ENCODE measurements at regions of chr14 and their contacts with region 1.

Region 1: DNA sequence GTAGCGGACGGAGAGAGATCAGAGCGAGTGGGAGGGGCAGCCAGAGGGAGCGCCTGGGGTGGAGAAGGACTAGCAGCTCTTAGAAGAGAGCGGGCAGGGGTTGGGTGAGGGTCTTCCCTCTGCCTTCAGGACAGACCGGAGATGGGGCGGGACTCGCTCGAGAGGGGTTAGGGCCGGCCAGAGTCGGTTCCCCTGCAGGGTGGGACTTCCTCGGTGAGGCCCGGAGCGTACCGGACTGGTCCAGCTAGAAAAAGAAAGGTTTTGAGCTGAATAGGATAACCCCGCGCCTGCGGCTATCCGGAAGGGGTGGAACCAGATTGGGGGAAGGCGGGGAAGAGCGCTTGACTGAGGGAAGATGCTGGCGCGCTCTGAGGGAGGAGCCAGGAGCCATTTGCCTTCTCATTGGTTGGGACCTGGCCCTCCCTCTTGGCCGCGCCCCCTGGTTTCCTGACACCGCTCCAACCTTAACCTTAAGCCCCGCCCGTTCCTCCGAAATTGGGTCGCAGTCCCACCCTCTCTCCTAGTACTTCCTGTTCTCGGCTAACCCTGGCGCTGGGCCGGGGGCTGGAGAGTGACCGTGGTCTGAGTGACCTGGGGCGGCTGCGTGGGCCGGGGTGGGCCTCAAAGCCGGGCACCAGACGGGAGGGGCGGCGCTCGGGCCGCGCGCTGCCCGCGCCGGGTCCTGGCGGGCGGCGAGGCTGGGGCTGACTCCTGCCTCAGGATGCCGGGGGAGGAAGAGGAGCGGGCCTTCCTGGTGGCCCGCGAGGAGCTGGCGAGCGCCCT is at the start of gene RNF31:
- DNase-seq: peak; percentile 99
- H3K4me3 Mint-ChIP-seq: peak within 1 kb of the TSS; percentile 97
- H3K27ac Mint-ChIP-seq: peak within 1 kb of the TSS; percentile 99
- H3K4me1 Mint-ChIP-seq: peaks cover 54% of the 10 kb centered on the region
- H3K27me3 Mint-ChIP-seq: no peaks in the 10 kb centered on the region
- total RNA-seq, gene RNF31: 51.1 to 53.8 TPM

Region 2: GRCh38 chr14:24093901-24094761 is 53.0 kb before region 1 on chr14 and contains the start of gene PCK2:
- CTCF ChIA-PET with region 1: interaction called, 6 read pairs
- intact Hi-C with region 1: loop called (anchors 1 kb)
- DNase-seq: peak; percentile 94
- H3K4me3 Mint-ChIP-seq: peak within 1 kb of the TSS; percentile 99
- H3K27ac Mint-ChIP-seq: peak within 1 kb of the TSS; percentile 98
- H3K4me1 Mint-ChIP-seq: peaks cover 32% of the 10 kb centered on the region
- H3K27me3 Mint-ChIP-seq: no peaks in the 10 kb centered on the region
- total RNA-seq, gene PCK2: 117 TPM

Region 3: DNA sequence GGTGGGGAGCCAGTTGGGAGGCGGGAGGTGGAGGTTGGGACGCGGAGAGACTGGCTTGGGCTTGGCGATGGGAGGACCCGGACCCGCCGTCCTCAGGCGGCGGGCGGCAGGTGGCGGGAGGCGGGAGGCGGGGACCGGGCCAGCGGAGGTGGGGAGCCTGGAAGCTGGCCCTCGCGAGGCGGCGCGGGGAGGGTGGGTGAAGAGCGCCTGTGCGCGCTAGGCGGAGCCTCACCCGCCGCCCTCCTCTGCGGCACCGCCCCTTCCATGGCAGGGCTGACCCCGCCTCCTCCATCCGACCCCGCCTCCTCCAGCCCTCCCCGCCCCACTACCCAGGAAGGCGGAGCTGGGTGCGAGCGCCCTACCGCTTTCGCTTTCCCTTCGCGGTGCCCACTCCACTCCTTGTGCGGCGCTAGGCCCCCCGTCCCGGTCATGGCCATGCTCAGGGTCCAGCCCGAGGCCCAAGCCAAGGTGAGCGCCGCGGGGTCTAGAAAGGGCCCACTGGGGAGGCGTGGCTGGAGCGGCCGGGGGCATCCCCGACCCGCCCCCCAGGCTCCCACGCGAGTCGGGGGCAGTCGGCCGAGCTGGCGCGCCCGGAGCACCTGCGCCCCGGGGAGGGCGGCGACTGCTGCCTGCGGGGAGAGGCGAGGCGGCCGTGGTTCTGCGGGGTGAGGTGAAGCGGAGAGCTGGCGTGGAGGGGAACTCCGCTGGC is 11.2 kb before region 1 on chr14 and contains the start of gene PSME1:
- CTCF ChIA-PET with region 1: interaction called, 7 read pairs
- intact Hi-C with region 1: loop called (anchors 1 kb)
- DNase-seq: peak; percentile 97
- H3K4me3 Mint-ChIP-seq: peak within 1 kb of the TSS; percentile 86
- H3K27ac Mint-ChIP-seq: peak within 1 kb of the TSS; percentile 93
- H3K4me1 Mint-ChIP-seq: peaks cover 52% of the 10 kb centered on the region
- H3K27me3 Mint-ChIP-seq: no peaks in the 10 kb centered on the region
- total RNA-seq, gene PSME1: 406 to 416 TPM

Region 4: DNA sequence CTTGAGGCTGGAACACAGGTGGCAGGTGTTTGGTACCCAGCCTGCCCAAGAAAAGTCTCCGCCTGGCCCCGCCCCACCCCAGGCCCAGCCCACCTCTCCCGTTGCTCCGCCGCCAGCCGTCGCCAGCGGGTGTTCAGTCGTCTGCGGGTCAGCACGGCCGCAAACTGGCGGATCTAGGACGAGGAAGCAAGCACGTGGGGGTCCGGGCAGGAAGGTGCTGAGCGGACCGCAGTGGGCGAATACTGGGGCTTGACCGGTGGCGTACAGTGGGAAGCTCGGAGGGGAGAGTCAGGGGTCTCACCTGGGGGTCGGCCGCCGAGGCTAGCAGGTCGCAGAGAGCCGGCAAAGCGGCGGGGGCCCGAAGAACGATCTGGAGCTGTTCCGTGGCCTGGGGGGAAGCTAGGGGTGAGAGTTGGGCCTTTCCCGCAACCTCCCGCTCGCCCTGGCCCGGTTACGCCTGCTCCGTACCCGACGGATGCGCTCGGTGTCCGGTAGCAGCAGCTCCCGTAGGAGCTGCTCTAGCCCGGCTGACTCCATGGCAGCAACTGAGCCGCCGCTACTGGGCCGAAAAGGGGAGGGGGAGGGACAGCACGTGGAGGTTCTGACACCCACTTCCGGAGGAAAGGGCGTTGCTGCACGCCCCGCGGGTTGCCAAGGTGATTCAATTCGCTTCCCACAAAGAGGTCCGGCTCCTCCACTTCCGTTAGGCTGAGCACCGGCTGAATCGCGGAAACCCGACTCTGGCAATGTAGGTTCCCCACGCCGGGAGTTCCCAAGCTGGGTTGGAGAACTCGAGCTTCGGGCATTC is 41.3 kb after region 1 on chr14 and contains the start of gene IPO4:
- CTCF ChIA-PET with region 1: interaction called, 4 read pairs
- intact Hi-C with region 1: loop called (anchors 1 kb)
- DNase-seq: peak; percentile 97
- H3K4me3 Mint-ChIP-seq: peak within 1 kb of the TSS; percentile 85
- H3K27ac Mint-ChIP-seq: peak within 1 kb of the TSS; percentile 78
- H3K4me1 Mint-ChIP-seq: peaks cover 46% of the 10 kb centered on the region
- H3K27me3 Mint-ChIP-seq: no peaks in the 10 kb centered on the region
- total RNA-seq, gene IPO4: 64.2 to 74.5 TPM

Region 5: DNA sequence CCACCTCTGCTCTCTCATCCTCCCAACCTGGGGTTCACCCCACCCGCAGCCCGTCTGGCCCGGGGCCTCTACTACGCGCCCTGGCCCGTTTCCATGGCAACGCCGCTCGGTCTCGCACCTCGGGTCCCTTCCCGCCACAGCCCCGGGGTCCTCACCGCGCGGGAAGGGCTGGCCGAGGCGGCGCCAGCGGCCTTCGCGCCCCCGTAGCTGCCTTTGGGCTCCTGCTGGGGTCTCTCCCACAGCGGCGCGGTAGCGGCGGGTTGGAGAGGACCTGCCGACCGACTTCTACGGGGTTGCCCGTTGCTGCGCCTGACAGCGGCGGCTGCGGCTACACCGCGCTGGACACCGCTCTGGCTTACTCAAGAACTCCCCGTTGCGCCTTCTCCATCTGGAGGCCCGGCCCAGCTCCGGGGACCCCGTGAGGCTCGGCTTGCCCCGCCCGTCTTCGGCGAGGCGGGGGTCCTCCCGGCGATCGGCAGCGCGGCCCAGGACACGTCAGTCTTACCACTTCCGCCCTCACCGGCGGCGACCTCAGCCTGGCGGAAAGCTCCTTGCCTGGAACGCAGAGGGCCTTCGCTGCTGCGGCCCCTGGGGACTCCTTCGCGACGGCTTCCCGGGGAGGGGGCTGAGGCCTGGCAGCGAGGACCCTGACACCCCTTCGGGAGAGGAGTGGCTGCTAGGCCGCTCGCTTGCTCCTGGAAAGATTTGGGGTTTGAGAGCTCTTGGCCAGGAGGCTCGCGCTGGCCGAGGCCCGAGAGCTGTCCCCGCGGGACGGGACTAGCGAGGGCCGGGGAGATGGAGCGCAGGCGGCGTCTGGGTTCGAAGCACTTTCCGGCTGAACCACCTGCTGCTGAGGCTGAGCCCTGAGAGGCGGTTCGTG is 48.3 kb after region 1 on chr14 and contains the start of gene TM9SF1:
- CTCF ChIA-PET with region 1: no interaction called
- intact Hi-C with region 1: loop called (anchors 1 kb)
- DNase-seq: peak; percentile 89
- H3K4me3 Mint-ChIP-seq: peak within 1 kb of the TSS; percentile 96
- H3K27ac Mint-ChIP-seq: peak within 1 kb of the TSS; percentile 93
- H3K4me1 Mint-ChIP-seq: peaks cover 56% of the 10 kb centered on the region
- H3K27me3 Mint-ChIP-seq: no peaks in the 10 kb centered on the region
- total RNA-seq, gene TM9SF1: 14.7 to 15.1 TPM

Region 6: DNA sequence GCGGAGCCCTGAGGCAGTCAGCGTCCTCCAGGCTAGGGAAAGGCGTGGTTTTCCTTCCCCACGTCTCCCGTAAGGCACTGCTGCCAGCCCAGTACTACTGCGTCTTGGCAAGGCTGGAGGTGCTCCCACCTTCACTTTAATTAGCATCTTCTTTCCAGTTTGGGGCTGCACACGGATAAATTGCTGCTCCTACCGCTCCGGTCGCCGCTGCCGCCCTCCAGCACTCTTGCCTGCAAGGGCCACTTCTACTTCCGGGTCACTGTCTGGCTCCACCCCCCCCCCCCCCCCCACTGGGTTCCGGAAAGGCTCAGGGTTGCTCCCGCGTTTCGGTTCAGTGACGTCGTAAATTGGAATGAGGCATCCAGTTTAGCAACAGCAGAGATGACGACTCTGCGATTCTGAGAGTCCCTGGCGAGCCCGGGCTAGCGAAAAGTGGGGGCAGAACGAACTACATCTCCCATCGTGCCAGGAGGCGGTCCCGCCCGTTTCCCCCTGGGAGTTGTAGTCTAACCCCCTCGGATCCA is 85.0 kb after region 1 on chr14 and contains the start of gene NEDD8:
- CTCF ChIA-PET with region 1: no interaction called
- intact Hi-C with region 1: loop called (anchors 1 kb)
- DNase-seq: peak; percentile 96
- H3K4me3 Mint-ChIP-seq: peak within 1 kb of the TSS; percentile 98
- H3K27ac Mint-ChIP-seq: peak within 1 kb of the TSS; percentile 97
- H3K4me1 Mint-ChIP-seq: peaks cover 52% of the 10 kb centered on the region
- H3K27me3 Mint-ChIP-seq: no peaks in the 10 kb centered on the region
- total RNA-seq, gene NEDD8: 172 to 196 TPM